GM12878 (cell line): ENCODE measurements at regions of chr2 and their contacts with region 1.

Region 1: GRCh38 chr2:156430236-156430979 is 5.8 kb upstream of the GPD2 start:
- DNase-seq: no peak
- ATAC-seq: peak; percentile 48
- H3K4me3 ChIP-seq: no peak overlapping the region; the same call in 1 of the 2 replicates
- H3K27ac ChIP-seq: peak overlapping the region; percentile 83
- H3K4me1 ChIP-seq: peaks cover 28% of the 10 kb centered on the region
- H3K27me3 ChIP-seq: no peaks in the 10 kb centered on the region
- CTCF ChIP-seq: no peak
- EP300 ChIP-seq: no peak
- POLR2A ChIP-seq: no peak
- RAD21 ChIP-seq: no peak

Region 2: DNA sequence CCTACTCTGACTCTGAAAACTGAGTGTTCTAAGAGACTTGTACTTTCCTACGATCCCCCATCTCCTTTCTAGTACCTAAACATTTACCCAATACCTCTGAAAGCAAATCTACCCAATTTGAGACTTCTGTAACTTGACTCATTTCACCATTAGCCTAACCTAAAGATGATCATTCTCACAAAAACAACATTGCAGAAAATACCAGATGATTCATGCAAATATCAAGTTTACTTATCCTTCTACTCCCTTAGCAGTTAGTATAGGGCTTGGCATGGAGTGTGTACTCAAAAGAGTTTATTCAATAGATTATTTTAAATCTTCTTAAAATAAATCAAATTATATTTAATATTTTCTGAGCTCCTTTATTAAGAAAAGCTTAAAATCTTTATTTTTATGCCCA is 187.5 kb before region 1 on chr2:
- CTCF ChIA-PET with region 1: no interaction called
- POLR2A ChIA-PET with region 1: no interaction called
- RAD21 ChIA-PET with region 1: no interaction called
- SMC1A ChIA-PET with region 1: no interaction called
- in situ Hi-C with region 1: no loop called
- intact Hi-C with region 1: no loop called
- DNase-seq: no peak
- ATAC-seq: no peak
- H3K4me3 ChIP-seq: no peak overlapping the region
- H3K27ac ChIP-seq: no peak overlapping the region
- H3K4me1 ChIP-seq: no peaks in the 10 kb centered on the region
- H3K27me3 ChIP-seq: no peaks in the 10 kb centered on the region
- CTCF ChIP-seq: no peak
- EP300 ChIP-seq: no peak
- POLR2A ChIP-seq: no peak
- RAD21 ChIP-seq: no peak

Region 3: GRCh38 chr2:156443089-156443488 is 12.7 kb after region 1 on chr2:
- CTCF ChIA-PET with region 1: interaction called, 4 read pairs
- POLR2A ChIA-PET with region 1: interaction called, 5 read pairs
- RAD21 ChIA-PET with region 1: interaction called, 4 read pairs
- SMC1A ChIA-PET with region 1: interaction called, 25 read pairs
- in situ Hi-C with region 1: no loop called
- intact Hi-C with region 1: no loop called
- DNase-seq: no peak
- ATAC-seq: no peak
- H3K4me3 ChIP-seq: no peak overlapping the region
- H3K27ac ChIP-seq: no peak overlapping the region
- H3K4me1 ChIP-seq: peaks cover 18% of the 10 kb centered on the region
- H3K27me3 ChIP-seq: no peaks in the 10 kb centered on the region
- CTCF ChIP-seq: no peak
- EP300 ChIP-seq: no peak
- POLR2A ChIP-seq: no peak
- RAD21 ChIP-seq: no peak

Region 4: DNA sequence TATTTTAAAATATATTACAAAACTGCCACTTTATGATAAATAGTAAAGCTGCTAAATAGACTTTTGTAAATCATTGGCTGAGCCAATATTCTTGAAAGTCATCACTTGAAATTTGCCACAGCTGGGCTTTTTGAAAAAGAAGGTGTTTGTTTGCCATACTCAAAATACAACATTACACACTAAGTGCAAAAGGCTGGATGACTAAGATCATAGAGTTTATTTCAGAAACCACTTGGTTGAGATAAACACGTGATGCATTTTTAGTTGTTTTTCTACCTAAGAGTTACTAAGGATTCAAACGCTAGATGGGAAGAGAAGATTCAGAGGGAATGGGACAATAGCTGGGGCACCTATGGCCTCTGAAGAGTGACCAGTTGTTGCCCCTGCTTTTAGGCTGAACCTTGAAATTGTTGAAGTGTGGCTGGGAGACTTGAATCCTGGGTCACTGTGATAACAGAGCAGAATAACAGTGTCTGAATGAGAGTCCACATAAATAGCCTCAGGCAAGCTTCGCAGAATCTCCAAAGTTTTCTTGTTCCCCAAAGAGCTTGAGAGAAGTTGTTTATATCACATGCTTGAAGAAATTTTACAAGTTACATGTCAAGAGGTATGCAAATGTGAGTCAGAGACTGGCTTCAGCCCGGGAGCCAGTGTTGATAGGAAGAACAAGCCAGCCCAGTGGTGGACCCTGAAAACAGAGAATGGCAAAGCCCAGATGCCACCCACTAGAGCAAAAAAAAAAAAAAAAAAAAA is 415.6 kb after region 1 on chr2:
- CTCF ChIA-PET with region 1: no interaction called
- POLR2A ChIA-PET with region 1: no interaction called
- RAD21 ChIA-PET with region 1: no interaction called
- SMC1A ChIA-PET with region 1: no interaction called
- in situ Hi-C with region 1: no loop called
- intact Hi-C with region 1: no loop called
- DNase-seq: no peak
- ATAC-seq: no peak
- H3K4me3 ChIP-seq: no peak overlapping the region
- H3K27ac ChIP-seq: no peak overlapping the region
- H3K4me1 ChIP-seq: no peaks in the 10 kb centered on the region
- H3K27me3 ChIP-seq: no peaks in the 10 kb centered on the region
- CTCF ChIP-seq: no peak
- EP300 ChIP-seq: no peak
- POLR2A ChIP-seq: no peak
- RAD21 ChIP-seq: no peak